Activated T-helper 2 cell treated with anti-CD3 and anti-CD28 coated beads, Interferon-gamma antibody, Interleukin-2, Interleukin-4, amounts not matched to agents 10 μg/mL and 5 μg/mL and 100 μg/mL, durations not matched to agents 14 hours and 24 hours and 36 hours (primary cell): ENCODE measurements at regions of chr13 and their contacts with region 1.

Region 1: GRCh38 chr13:39777527-39778061 is 122.1 kb downstream of the COG6 start:
- DNase-seq: no peak
- H3K4me3 Mint-ChIP-seq: no peak overlapping the region
- H3K27ac Mint-ChIP-seq: peak overlapping the region; percentile 86
- H3K4me1 Mint-ChIP-seq: peaks cover 50% of the 10 kb centered on the region
- H3K27me3 Mint-ChIP-seq: no peaks in the 10 kb centered on the region

Region 2: GRCh38 chr13:38967446-38967845 is 810.1 kb before region 1 on chr13:
- intact Hi-C with region 1: no loop called
- DNase-seq: no peak
- H3K4me3 Mint-ChIP-seq: no peak overlapping the region
- H3K27ac Mint-ChIP-seq: no peak overlapping the region
- H3K4me1 Mint-ChIP-seq: no peaks in the 10 kb centered on the region
- H3K27me3 Mint-ChIP-seq: peaks cover 8% of the 10 kb centered on the region

Region 3: GRCh38 chr13:39635564-39635963 is 142.0 kb before region 1 on chr13:
- intact Hi-C with region 1: no loop called
- DNase-seq: no peak
- H3K4me3 Mint-ChIP-seq: no peak overlapping the region
- H3K27ac Mint-ChIP-seq: no peak overlapping the region
- H3K4me1 Mint-ChIP-seq: no peaks in the 10 kb centered on the region
- H3K27me3 Mint-ChIP-seq: peaks cover 18% of the 10 kb centered on the region

Region 4: GRCh38 chr13:39804332-39805210 is 27.0 kb after region 1 on chr13:
- intact Hi-C with region 1: loop called (anchors 1 kb)
- DNase-seq: no peak
- H3K4me3 Mint-ChIP-seq: no peak overlapping the region
- H3K27ac Mint-ChIP-seq: no peak overlapping the region
- H3K4me1 Mint-ChIP-seq: peaks cover 16% of the 10 kb centered on the region
- H3K27me3 Mint-ChIP-seq: no peaks in the 10 kb centered on the region

Region 5: GRCh38 chr13:39867807-39868206 is 90.2 kb after region 1 on chr13:
- intact Hi-C with region 1: loop called (anchors 5 kb)
- DNase-seq: no peak
- H3K4me3 Mint-ChIP-seq: no peak overlapping the region
- H3K27ac Mint-ChIP-seq: no peak overlapping the region
- H3K4me1 Mint-ChIP-seq: peaks cover 9% of the 10 kb centered on the region
- H3K27me3 Mint-ChIP-seq: no peaks in the 10 kb centered on the region

Region 6: GRCh38 chr13:39942552-39943273 is 165.1 kb after region 1 on chr13:
- intact Hi-C with region 1: loop called (anchors 2 kb)
- DNase-seq: peak; percentile 38
- H3K4me3 Mint-ChIP-seq: no peak overlapping the region
- H3K27ac Mint-ChIP-seq: no peak overlapping the region
- H3K4me1 Mint-ChIP-seq: peaks cover 17% of the 10 kb centered on the region
- H3K27me3 Mint-ChIP-seq: peaks cover 1% of the 10 kb centered on the region

Region 7: GRCh38 chr13:40221460-40222201 is 444.0 kb after region 1 on chr13:
- intact Hi-C with region 1: loop called (anchors 10 kb)
- DNase-seq: peak; percentile 17
- H3K4me3 Mint-ChIP-seq: peak overlapping the region; percentile 1
- H3K27ac Mint-ChIP-seq: peak overlapping the region; percentile 83
- H3K4me1 Mint-ChIP-seq: peaks cover 38% of the 10 kb centered on the region
- H3K27me3 Mint-ChIP-seq: peaks cover 2% of the 10 kb centered on the region

Region 8: DNA sequence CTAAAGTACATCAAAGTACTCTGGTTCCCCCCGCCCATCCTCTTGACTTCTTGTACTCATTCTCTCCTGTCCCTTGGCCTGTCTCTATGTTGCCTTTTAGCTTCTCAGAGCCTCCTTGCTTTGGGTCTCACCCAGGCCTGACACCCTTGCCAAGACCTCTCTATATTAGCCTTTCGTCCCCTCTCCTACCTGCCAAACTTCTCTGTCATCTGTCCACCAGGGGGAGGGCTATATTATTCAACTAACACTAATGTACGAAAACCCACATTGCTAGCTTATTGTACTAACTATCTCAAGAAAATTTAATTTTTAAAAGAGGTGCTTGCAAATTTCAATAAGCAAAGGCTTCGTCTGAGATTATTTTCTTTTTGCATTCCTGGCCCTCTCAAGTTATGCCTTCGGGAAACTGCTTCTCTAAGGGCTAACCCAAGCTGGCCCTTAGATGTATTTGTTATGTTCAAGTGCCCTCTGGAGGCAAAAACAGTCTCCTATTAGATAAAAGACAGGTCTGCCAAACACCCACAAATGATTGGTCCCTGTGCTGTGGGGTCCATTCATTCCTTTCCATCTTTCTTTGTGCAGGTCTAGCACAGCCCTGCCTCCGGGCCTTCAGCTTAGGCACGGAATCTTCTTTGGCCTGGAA is 999.7 kb after region 1 on chr13:
- intact Hi-C with region 1: loop called (anchors 1 kb)
- DNase-seq: peak; percentile 36
- H3K4me3 Mint-ChIP-seq: peak overlapping the region; percentile 72
- H3K27ac Mint-ChIP-seq: peak overlapping the region; percentile 99
- H3K4me1 Mint-ChIP-seq: peaks cover 35% of the 10 kb centered on the region
- H3K27me3 Mint-ChIP-seq: no peaks in the 10 kb centered on the region